ENCODE measurements at regions of chr6 and their contacts with region 1.

Region 1: GRCh38 chr6:151409260-151409659 is 17.9 kb upstream of the ZBTB2 start:
- DNase-seq: no peak
- ATAC-seq: no peak
- H3K4me3 ChIP-seq: no peak overlapping the region
- H3K4me3 Mint-ChIP-seq: no peak overlapping the region
- H3K27ac ChIP-seq: no peak overlapping the region
- H3K27ac Mint-ChIP-seq: peak overlapping the region; percentile 62
- H3K4me1 ChIP-seq: peaks cover 14% of the 10 kb centered on the region
- H3K4me1 Mint-ChIP-seq: peaks cover 34% of the 10 kb centered on the region
- H3K27me3 ChIP-seq: no peaks in the 10 kb centered on the region
- H3K27me3 Mint-ChIP-seq: no peaks in the 10 kb centered on the region
- CTCF ChIP-seq: no peak

Region 2: GRCh38 chr6:151101161-151101820 is 308.0 kb before region 1 on chr6:
- CTCF ChIA-PET with region 1: no interaction called
- POLR2A ChIA-PET with region 1: no interaction called
- intact Hi-C with region 1: no loop called
- DNase-seq: no peak
- ATAC-seq: no peak
- H3K4me3 ChIP-seq: no peak overlapping the region
- H3K4me3 Mint-ChIP-seq: no peak overlapping the region
- H3K27ac ChIP-seq: no peak overlapping the region
- H3K27ac Mint-ChIP-seq: no peak overlapping the region
- H3K4me1 ChIP-seq: no peaks in the 10 kb centered on the region
- H3K4me1 Mint-ChIP-seq: no peaks in the 10 kb centered on the region
- H3K27me3 ChIP-seq: no peaks in the 10 kb centered on the region
- H3K27me3 Mint-ChIP-seq: no peaks in the 10 kb centered on the region
- CTCF ChIP-seq: no peak

Region 3: DNA sequence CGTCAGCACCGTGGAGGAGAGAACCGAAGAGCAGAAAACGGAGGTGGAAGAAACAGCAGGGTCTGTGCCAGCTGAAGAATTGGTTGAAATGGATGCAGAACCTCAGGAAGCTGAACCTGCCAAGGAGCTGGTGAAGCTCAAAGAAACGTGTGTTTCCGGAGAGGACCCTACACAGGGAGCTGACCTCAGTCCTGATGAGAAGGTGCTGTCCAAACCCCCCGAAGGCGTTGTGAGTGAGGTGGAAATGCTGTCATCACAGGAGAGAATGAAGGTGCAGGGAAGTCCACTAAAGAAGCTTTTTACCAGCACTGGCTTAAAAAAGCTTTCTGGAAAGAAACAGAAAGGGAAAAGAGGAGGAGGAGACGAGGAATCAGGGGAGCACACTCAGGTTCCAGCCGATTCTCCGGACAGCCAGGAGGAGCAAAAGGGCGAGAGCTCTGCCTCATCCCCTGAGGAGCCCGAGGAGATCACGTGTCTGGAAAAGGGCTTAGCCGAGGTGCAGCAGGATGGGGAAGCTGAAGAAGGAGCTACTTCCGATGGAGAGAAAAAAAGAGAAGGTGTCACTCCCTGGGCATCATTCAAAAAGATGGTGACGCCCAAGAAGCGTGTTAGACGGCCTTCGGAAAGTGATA is 59.5 kb before region 1 on chr6:
- CTCF ChIA-PET with region 1: interaction called, 5 read pairs
- POLR2A ChIA-PET with region 1: no interaction called
- intact Hi-C with region 1: loop called in 1 of 2 experiments (anchors 10 kb)
- DNase-seq: peak in 1 of 9 experiments; percentile 19
- ATAC-seq: no peak
- H3K4me3 ChIP-seq: no peak overlapping the region
- H3K4me3 Mint-ChIP-seq: no peak overlapping the region
- H3K27ac ChIP-seq: no peak overlapping the region
- H3K27ac Mint-ChIP-seq: no peak overlapping the region
- H3K4me1 ChIP-seq: no peaks in the 10 kb centered on the region
- H3K4me1 Mint-ChIP-seq: no peaks in the 10 kb centered on the region
- H3K27me3 ChIP-seq: no peaks in the 10 kb centered on the region
- H3K27me3 Mint-ChIP-seq: no peaks in the 10 kb centered on the region
- CTCF ChIP-seq: no peak

Region 4: GRCh38 chr6:151379933-151380847 is 29.1 kb before region 1 on chr6:
- CTCF ChIA-PET with region 1: interaction called, 12 read pairs
- POLR2A ChIA-PET with region 1: interaction called, 5 read pairs
- intact Hi-C with region 1: no loop called
- DNase-seq: peak in 2 of 9 experiments; percentile 49 to 73
- ATAC-seq: peak; percentile 82
- H3K4me3 ChIP-seq: peak overlapping the region; percentile 43 to 49
- H3K4me3 Mint-ChIP-seq: peak overlapping the region; percentile 79
- H3K27ac ChIP-seq: peak overlapping the region; percentile 68 to 93
- H3K27ac Mint-ChIP-seq: peak overlapping the region; percentile 92
- H3K4me1 ChIP-seq: peaks cover 57% of the 10 kb centered on the region
- H3K4me1 Mint-ChIP-seq: peaks cover 72% of the 10 kb centered on the region
- H3K27me3 ChIP-seq: no peaks in the 10 kb centered on the region
- H3K27me3 Mint-ChIP-seq: no peaks in the 10 kb centered on the region
- CTCF ChIP-seq: no peak

Region 5: GRCh38 chr6:151440930-151441329 is 31.7 kb after region 1 on chr6:
- CTCF ChIA-PET with region 1: interaction called, 31 read pairs
- POLR2A ChIA-PET with region 1: no interaction called
- intact Hi-C with region 1: no loop called
- DNase-seq: peak in 2 of 9 experiments; percentile 55 to 67
- ATAC-seq: peak; percentile 52
- H3K4me3 ChIP-seq: no peak overlapping the region
- H3K4me3 Mint-ChIP-seq: no peak overlapping the region
- H3K27ac ChIP-seq: peak overlapping the region in 1 of 2 experiments; percentile 23
- H3K27ac Mint-ChIP-seq: no peak overlapping the region
- H3K4me1 ChIP-seq: peaks cover 16% of the 10 kb centered on the region
- H3K4me1 Mint-ChIP-seq: peaks cover 47% of the 10 kb centered on the region
- H3K27me3 ChIP-seq: no peaks in the 10 kb centered on the region
- H3K27me3 Mint-ChIP-seq: no peaks in the 10 kb centered on the region
- CTCF ChIP-seq: peak; percentile 69

Region 6: GRCh38 chr6:151498327-151498726 is 89.1 kb after region 1 on chr6:
- CTCF ChIA-PET with region 1: no interaction called
- POLR2A ChIA-PET with region 1: no interaction called
- intact Hi-C with region 1: no loop called
- DNase-seq: no peak
- ATAC-seq: no peak
- H3K4me3 ChIP-seq: no peak overlapping the region
- H3K4me3 Mint-ChIP-seq: no peak overlapping the region
- H3K27ac ChIP-seq: no peak overlapping the region
- H3K27ac Mint-ChIP-seq: no peak overlapping the region
- H3K4me1 ChIP-seq: peaks cover 12% of the 10 kb centered on the region
- H3K4me1 Mint-ChIP-seq: peaks cover 12% of the 10 kb centered on the region
- H3K27me3 ChIP-seq: peaks cover 8 to 10% of the 10 kb centered on the region in 2 experiments
- H3K27me3 Mint-ChIP-seq: peaks cover 49% of the 10 kb centered on the region
- CTCF ChIP-seq: no peak

Region 7: GRCh38 chr6:151647976-151648639 is 238.8 kb after region 1 on chr6:
- CTCF ChIA-PET with region 1: no interaction called
- POLR2A ChIA-PET with region 1: no interaction called
- intact Hi-C with region 1: no loop called
- DNase-seq: no peak
- ATAC-seq: no peak
- H3K4me3 ChIP-seq: no peak overlapping the region
- H3K4me3 Mint-ChIP-seq: no peak overlapping the region
- H3K27ac ChIP-seq: no peak overlapping the region
- H3K27ac Mint-ChIP-seq: no peak overlapping the region
- H3K4me1 ChIP-seq: no peaks in the 10 kb centered on the region
- H3K4me1 Mint-ChIP-seq: peaks cover 2% of the 10 kb centered on the region
- H3K27me3 ChIP-seq: no peaks in the 10 kb centered on the region
- H3K27me3 Mint-ChIP-seq: peaks cover 17% of the 10 kb centered on the region
- CTCF ChIP-seq: no peak

Measured in CD8-positive, alpha-beta T cell (primary cell).